Heart right ventricle (tissue), 16 donors: ENCODE measurements at regions of chr12 and their contacts with region 1.

Region 1: GRCh38 chr12:3034067-3034750 is 43.0 kb upstream of the TSPAN9 start:
- DNase-seq: peak; percentile 65 to 66
- ATAC-seq: peak; percentile 67 to 81 (median 74)
- H3K4me3 ChIP-seq: no peak overlapping the region
- H3K27ac ChIP-seq: no peak overlapping the region
- H3K4me1 ChIP-seq: peaks cover 0 to 53% (median 22%) of the 10 kb centered on the region in 9 donors
- H3K27me3 ChIP-seq: no peaks in the 10 kb centered on the region
- CTCF ChIP-seq: peak; percentile 49 to 79 (median 75)

Region 2: GRCh38 chr12:2845280-2845679 is 188.9 kb before region 1 on chr12:
- intact Hi-C with region 1: loop called in 9 of 10 experiments (anchors 5 to 10 kb)
- DNase-seq: peak; percentile 28 to 50
- ATAC-seq: peak; percentile 18 to 87 (median 70)
- H3K4me3 ChIP-seq: no peak overlapping the region
- H3K27ac ChIP-seq: peak overlapping the region in 5 of 10 donors; percentile 19 to 63 (median 36)
- H3K4me1 ChIP-seq: peaks cover 0 to 15% (median 0%) of the 10 kb centered on the region in 9 donors
- H3K27me3 ChIP-seq: no peaks in the 10 kb centered on the region
- CTCF ChIP-seq: no peak

Region 3: DNA sequence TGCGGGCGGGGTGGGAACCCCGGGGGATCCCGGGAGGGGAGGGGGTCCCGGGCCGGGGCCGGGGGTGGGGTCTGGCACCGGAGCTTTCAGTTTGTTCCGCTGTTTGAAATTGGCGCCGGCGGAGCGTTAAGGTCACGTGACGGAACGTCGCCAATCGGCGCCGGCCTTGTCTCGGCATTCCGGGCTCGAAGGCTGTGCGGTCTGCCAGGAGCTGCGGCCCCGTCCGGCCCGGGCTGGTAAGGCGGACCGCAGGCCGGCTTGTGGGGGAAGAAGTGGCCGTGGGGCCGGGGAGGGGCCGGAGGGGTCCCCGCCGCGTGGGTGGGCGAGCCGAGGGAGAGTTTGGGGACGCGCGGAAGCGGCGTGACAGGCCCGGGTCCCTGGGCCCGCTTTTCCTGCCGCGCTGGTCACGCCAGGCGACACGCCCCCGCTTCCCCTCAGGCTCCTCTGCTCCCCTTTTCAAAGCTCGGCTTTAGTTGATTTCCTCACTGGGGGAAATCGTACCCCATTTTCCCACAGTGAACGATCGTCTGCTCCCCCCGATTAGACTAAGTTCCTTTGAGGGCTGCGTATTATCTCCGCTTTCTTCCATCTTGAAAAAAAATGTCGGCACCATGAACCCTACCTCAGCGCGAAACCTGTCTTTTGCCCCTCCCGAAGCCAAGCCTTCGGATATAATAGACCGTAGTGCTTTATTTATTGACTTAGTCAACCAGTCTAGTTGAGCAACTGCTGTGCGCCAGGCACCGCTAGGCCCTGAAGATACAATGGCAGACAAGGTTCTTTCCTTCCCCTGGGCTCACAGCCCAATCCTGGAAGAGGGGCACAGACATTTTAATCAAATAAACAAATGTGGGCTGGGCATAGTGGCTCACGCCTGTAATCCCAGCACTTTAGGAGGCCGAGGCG is 156.9 kb before region 1 on chr12 and contains the starts of genes FOXM1 and RHNO1:
- intact Hi-C with region 1: loop called in 3 of 10 experiments (anchors 5 to 10 kb)
- DNase-seq: peak; percentile 90 to 91
- ATAC-seq: peak; percentile 94 to 97 (median 96)
- H3K4me3 ChIP-seq: peak within 1 kb of the TSS; percentile 59 to 99 (median 92)
- H3K27ac ChIP-seq: peak within 1 kb of the TSS in 9 of 10 donors; percentile 61 to 99 (median 88)
- H3K4me1 ChIP-seq: peaks cover 10 to 26% (median 18%) of the 10 kb centered on the region in 9 donors
- H3K27me3 ChIP-seq: no peaks in the 10 kb centered on the region
- CTCF ChIP-seq: peak in 5 of 9 donors; percentile 7 to 50 (median 35)
- total RNA-seq, gene FOXM1: 0.19 to 10.9 (median 0.89) TPM in 9 of 10 donors, not detected in the other
- total RNA-seq, gene RHNO1: 3.7 to 10.9 (median 7.1) TPM

Region 4: DNA sequence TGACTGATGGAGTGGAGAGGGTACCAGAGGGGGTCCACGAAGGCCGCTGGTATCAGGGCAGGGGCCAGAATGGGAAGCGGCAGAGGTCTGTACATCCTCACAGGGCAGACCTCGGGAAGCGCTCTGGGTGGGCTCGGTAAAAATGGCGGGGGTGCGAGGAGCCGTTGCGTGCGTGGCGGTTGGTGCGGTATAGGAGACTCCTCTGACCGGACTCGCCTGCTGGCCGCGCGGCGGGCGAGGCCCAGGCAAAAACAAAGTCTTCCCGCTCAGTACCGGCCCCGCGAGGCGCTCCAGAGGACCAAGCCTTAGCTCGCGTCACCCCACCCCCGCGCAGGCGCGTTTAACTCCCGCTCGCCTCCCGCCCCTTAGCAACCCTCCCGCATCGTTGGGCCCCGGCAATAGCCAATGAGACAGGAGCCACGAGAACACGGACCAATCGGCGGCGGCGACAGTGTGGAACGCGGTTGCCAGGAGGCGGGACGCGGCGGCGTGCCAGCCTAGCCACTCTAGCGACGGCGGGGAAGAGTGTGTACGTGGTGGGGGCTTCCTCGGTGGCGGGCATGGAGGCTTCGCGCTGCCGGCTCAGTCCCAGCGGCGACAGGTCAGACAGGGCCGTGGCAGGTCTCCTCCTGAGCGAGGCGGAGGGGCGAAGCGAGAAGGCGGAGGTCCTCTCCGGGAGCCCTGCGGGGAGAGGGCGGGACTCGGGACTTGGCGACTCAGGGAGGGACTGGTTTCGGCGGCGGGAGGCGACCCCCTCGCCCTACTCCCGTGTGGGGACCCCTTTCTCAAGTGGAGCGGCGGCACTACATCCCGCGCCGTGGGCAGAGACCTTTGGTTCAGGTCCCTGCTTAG is 143.6 kb before region 1 on chr12 and contains the start of gene TULP3:
- intact Hi-C with region 1: loop called in 7 of 10 experiments (anchors 2 to 10 kb)
- DNase-seq: peak; percentile 99
- ATAC-seq: peak; percentile 99
- H3K4me3 ChIP-seq: peak within 1 kb of the TSS; percentile 84 to 100 (median 95)
- H3K27ac ChIP-seq: peak within 1 kb of the TSS; percentile 83 to 96 (median 92)
- H3K4me1 ChIP-seq: peaks cover 0 to 30% (median 17%) of the 10 kb centered on the region in 9 donors
- H3K27me3 ChIP-seq: no peaks in the 10 kb centered on the region
- CTCF ChIP-seq: peak in 5 of 9 donors; percentile 6 to 39 (median 28)
- total RNA-seq, gene TULP3: 4.0 to 7.3 (median 4.6) TPM

Region 5: GRCh38 chr12:2959505-2960389 is 74.5 kb before region 1 on chr12:
- intact Hi-C with region 1: loop called in 8 of 10 experiments (anchors 5 to 10 kb)
- DNase-seq: peak; percentile 48 to 67
- ATAC-seq: peak; percentile 32 to 75 (median 40)
- H3K4me3 ChIP-seq: peak overlapping the region; percentile 35 to 74 (median 64)
- H3K27ac ChIP-seq: peak overlapping the region; percentile 78 to 94 (median 88)
- H3K4me1 ChIP-seq: peaks cover 3 to 55% (median 26%) of the 10 kb centered on the region in 9 donors
- H3K27me3 ChIP-seq: peaks cover 0 to 60% (median 0%) of the 10 kb centered on the region in 7 donors
- CTCF ChIP-seq: peak in 1 of 9 donors; percentile 12